CD8-positive, alpha-beta memory T cell (primary cell): ENCODE measurements at regions of chr20 and their contacts with region 1.

Region 1: GRCh38 chr20:58650776-58651558 is at the start of gene STX16:
- DNase-seq: peak; percentile 75 to 87 (median 76)
- H3K4me3 ChIP-seq: peak within 1 kb of the TSS; percentile 95
- H3K4me3 Mint-ChIP-seq: peak within 1 kb of the TSS; percentile 93 to 100 (median 98)
- H3K27ac ChIP-seq: peak within 1 kb of the TSS; percentile 97
- H3K27ac Mint-ChIP-seq: peak within 1 kb of the TSS; percentile 98 to 100 (median 100)
- H3K4me1 ChIP-seq: peaks cover 31% of the 10 kb centered on the region
- H3K4me1 Mint-ChIP-seq: peaks cover 23 to 44% (median 40%) of the 10 kb centered on the region in 3 donors
- H3K27me3 ChIP-seq: no peaks in the 10 kb centered on the region
- H3K27me3 Mint-ChIP-seq: peaks cover 0 to 3% of the 10 kb centered on the region in 2 donors
- total RNA-seq, gene STX16: 69.2 to 72.8 TPM

Region 2: DNA sequence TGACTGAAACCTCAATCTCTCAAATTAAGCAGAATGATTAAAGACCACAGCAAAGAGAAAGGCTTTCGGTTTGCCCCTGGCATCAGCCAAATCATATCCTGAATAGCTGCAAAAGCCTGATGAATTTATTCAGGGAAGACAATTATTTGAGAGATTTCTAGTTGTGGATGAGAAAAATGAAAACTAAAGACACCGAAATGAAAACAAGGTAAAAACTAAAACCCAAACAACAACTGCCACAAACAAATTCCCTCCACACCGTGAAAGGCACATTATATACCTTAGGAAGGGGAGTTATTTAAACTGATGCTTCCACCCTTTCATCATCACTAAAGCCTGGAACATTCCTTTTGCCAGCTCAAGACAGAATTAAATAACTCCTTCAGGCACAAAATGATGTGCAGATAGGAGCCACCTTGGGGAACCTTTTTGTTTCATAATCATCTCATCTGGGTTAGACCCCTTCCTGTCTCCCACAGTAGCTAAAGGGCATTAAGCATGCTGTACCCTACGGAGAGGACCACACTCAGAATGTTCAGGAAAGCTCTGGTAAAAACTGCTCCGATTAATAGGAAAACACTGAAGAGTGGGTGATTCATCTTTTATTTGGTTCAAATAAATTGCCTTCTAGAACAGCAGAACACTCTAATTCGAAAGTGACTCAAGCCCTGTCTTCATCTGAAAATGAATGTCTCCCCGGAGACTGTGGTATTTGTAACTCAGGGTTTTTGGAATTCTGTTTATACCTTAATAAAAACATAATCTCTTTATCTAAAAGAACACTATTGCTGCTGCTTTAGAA is 413.4 kb before region 1 on chr20:
- CTCF ChIA-PET with region 1: interaction called, 5 read pairs
- POLR2A ChIA-PET with region 1: interaction called, 10 read pairs
- DNase-seq: no peak
- H3K4me3 ChIP-seq: no peak overlapping the region
- H3K4me3 Mint-ChIP-seq: peak overlapping the region; percentile 87 to 94 (median 91)
- H3K27ac ChIP-seq: no peak overlapping the region
- H3K27ac Mint-ChIP-seq: peak overlapping the region; percentile 55 to 95 (median 90)
- H3K4me1 ChIP-seq: peaks cover 3% of the 10 kb centered on the region
- H3K4me1 Mint-ChIP-seq: peaks cover 12 to 27% (median 20%) of the 10 kb centered on the region in 3 donors
- H3K27me3 ChIP-seq: no peaks in the 10 kb centered on the region
- H3K27me3 Mint-ChIP-seq: no peaks in the 10 kb centered on the region

Region 3: GRCh38 chr20:58388882-58389323 is 262.1 kb before region 1 on chr20 and contains the start of gene VAPB:
- CTCF ChIA-PET with region 1: interaction called, 4 read pairs
- POLR2A ChIA-PET with region 1: interaction called, 15 read pairs
- DNase-seq: peak; percentile 95 to 97 (median 97)
- H3K4me3 ChIP-seq: peak within 1 kb of the TSS; percentile 86
- H3K4me3 Mint-ChIP-seq: peak within 1 kb of the TSS; percentile 89 to 98 (median 95)
- H3K27ac ChIP-seq: peak within 1 kb of the TSS; percentile 96
- H3K27ac Mint-ChIP-seq: peak within 1 kb of the TSS; percentile 97 to 100 (median 99)
- H3K4me1 ChIP-seq: peaks cover 46% of the 10 kb centered on the region
- H3K4me1 Mint-ChIP-seq: peaks cover 42 to 54% (median 52%) of the 10 kb centered on the region in 3 donors
- H3K27me3 ChIP-seq: no peaks in the 10 kb centered on the region
- H3K27me3 Mint-ChIP-seq: peaks cover 4 to 12% of the 10 kb centered on the region in 2 donors
- total RNA-seq, gene VAPB: 36.6 to 40.3 TPM

Region 4: GRCh38 chr20:58692594-58693226 is 41.7 kb after region 1 on chr20 and contains the start of gene NPEPL1:
- CTCF ChIA-PET with region 1: interaction called, 22 read pairs
- POLR2A ChIA-PET with region 1: interaction called, 8 read pairs
- DNase-seq: peak; percentile 52 to 70 (median 60)
- H3K4me3 ChIP-seq: peak within 1 kb of the TSS; percentile 15
- H3K4me3 Mint-ChIP-seq: peak within 1 kb of the TSS; percentile 76 to 89 (median 79)
- H3K27ac ChIP-seq: no peak within 1 kb of the TSS
- H3K27ac Mint-ChIP-seq: peak within 1 kb of the TSS; percentile 61 to 98 (median 88)
- H3K4me1 ChIP-seq: peaks cover 8% of the 10 kb centered on the region
- H3K4me1 Mint-ChIP-seq: peaks cover 0 to 9% (median 4%) of the 10 kb centered on the region in 3 donors
- H3K27me3 ChIP-seq: no peaks in the 10 kb centered on the region
- H3K27me3 Mint-ChIP-seq: no peaks in the 10 kb centered on the region
- total RNA-seq, gene NPEPL1: 15.3 to 18.6 TPM